Left cardiac atrium (tissue), 4 donors: ENCODE measurements at regions of chr2 and their contacts with region 1.

Region 1: GRCh38 chr2:9984217-9984739 is 32.8 kb downstream of the GRHL1 start:
- DNase-seq: no peak
- ATAC-seq: peak; percentile 54 to 67

Region 2: GRCh38 chr2:10036095-10036884 is 52.0 kb after region 1 on chr2:
- intact Hi-C with region 1: no loop called
- DNase-seq: peak; percentile 79
- ATAC-seq: peak; percentile 78 to 83

Region 3: GRCh38 chr2:10053351-10053750 is 69.1 kb after region 1 on chr2:
- intact Hi-C with region 1: loop called in 1 of 2 experiments (anchors 2 kb)
- DNase-seq: no peak
- ATAC-seq: no peak